ENCODE measurements at regions of chr2 and their contacts with region 1.

Region 1: DNA sequence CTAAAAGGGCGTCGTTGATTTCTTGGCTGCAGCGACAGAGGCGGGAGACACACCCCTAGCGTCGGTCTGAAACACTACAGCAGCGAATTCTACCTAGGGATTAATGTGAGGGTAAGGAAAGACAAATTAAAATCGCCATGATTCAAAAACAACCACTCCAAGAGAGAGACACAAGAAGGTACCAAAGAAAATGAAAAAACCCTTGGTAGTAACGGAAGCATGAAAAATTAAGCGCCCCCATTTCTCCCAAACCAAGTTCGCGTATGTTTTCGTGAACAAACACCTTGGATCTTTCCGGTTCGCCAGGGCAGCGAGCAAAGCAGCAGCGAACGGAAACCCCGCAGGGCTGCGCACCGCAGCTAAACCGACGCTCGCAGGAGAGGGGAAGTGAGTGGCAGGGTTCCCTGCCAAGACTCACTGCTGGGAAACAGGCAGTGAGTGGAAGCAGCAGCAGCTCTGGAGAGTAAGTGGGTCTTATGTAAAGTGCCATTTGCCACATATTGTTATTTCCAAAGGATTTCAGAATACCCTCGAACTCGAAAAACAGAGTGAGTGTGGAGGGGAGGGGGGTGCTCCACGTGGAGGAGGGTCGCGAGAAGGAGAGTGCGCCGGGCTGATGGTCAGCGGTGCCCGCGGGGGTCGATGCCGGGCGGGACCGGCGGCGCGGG is 1.0 kb downstream of the PPP3R1 start:
- DNase-seq: peak; percentile 92
- H3K4me3 Mint-ChIP-seq: peak overlapping the region; percentile 92
- H3K27ac Mint-ChIP-seq: peak overlapping the region; percentile 99
- H3K4me1 Mint-ChIP-seq: peaks cover 37% of the 10 kb centered on the region
- H3K27me3 Mint-ChIP-seq: peaks cover 4% of the 10 kb centered on the region

Region 2: DNA sequence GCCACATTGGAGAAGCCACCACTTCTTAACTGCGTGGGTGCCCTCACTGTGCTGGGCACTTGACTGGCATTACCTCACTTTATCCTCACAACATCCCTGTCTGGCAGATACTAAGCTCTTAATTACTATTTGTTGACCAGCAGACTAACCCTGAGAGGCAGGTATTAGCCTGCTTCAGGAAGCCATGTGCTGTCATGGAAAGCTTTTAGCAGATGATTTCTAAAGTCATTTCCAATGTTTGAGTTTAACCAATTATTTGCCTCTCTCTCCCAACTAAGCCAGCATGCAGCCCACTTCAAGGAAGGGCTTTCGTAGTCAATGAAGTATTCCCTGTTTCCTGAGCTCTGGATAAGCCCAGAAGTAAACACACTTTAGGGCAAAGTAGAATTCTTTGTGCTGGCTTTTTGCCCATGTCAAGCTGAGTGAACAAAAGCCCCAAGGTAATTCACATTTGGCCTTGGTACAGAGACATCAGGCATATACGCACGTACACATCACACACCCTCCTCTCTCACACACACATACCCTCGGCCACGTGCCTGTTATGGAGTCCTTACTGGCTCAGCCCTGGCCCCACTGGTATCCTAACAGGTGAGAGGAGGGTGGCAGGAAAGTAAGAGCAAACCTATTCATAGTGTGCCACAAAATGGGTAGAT is 297.1 kb before region 1 on chr2:
- intact Hi-C with region 1: no loop called
- DNase-seq: no peak
- H3K4me3 Mint-ChIP-seq: no peak overlapping the region
- H3K27ac Mint-ChIP-seq: no peak overlapping the region
- H3K4me1 Mint-ChIP-seq: peaks cover 3% of the 10 kb centered on the region
- H3K27me3 Mint-ChIP-seq: peaks cover 2% of the 10 kb centered on the region

Region 3: GRCh38 chr2:68062680-68063387 is 188.5 kb before region 1 on chr2 and contains the start of gene C1D:
- intact Hi-C with region 1: loop called (anchors 2 kb)
- DNase-seq: peak; percentile 98
- H3K4me3 Mint-ChIP-seq: peak within 1 kb of the TSS; percentile 93
- H3K27ac Mint-ChIP-seq: peak within 1 kb of the TSS; percentile 95
- H3K4me1 Mint-ChIP-seq: peaks cover 14% of the 10 kb centered on the region
- H3K27me3 Mint-ChIP-seq: peaks cover 22% of the 10 kb centered on the region
- total RNA-seq, gene C1D: 28.9 and 33.7 TPM in 2 replicates

Region 4: DNA sequence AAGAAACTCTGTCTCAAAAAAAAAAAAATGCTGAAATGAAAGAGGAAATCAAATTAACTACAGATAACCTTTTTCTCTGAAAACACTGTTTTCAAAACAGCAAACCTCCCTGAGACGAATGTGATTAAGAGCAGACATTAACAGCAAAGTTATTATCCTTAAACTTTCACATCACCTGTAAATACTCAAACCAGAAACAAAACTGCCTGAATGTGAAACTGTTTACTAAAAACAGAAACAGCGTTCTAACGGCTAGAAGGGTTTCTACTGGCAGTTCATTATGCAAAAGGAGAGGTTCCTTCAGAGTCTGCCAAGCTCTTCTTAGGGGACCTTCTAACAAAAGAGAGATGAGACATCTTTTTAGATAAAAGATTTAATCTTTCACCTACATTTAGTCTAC is 47.7 kb before region 1 on chr2:
- intact Hi-C with region 1: loop called (anchors 1 kb)
- DNase-seq: peak; percentile 68
- H3K4me3 Mint-ChIP-seq: peak overlapping the region; percentile 64
- H3K27ac Mint-ChIP-seq: peak overlapping the region; percentile 86
- H3K4me1 Mint-ChIP-seq: peaks cover 50% of the 10 kb centered on the region
- H3K27me3 Mint-ChIP-seq: no peaks in the 10 kb centered on the region

Region 5: GRCh38 chr2:68385220-68385906 is 134.0 kb after region 1 on chr2:
- intact Hi-C with region 1: loop called (anchors 5 kb)
- DNase-seq: peak; percentile 63
- H3K4me3 Mint-ChIP-seq: peak overlapping the region; percentile 10
- H3K27ac Mint-ChIP-seq: peak overlapping the region; percentile 45
- H3K4me1 Mint-ChIP-seq: peaks cover 38% of the 10 kb centered on the region
- H3K27me3 Mint-ChIP-seq: peaks cover 12% of the 10 kb centered on the region

Measured in activated CD4-positive, alpha-beta T cell treated with anti-CD3 and anti-CD28 coated beads, Interleukin-2, amount 10 ng/mL, durations not matched to agents 24 days and 14 days (primary cell).